PC-3 (cell line): ENCODE measurements at regions of chr18 and their contacts with region 1.

Region 1: GRCh38 chr18:72086421-72086820 is 457.7 kb downstream of the CBLN2 start:
- DNase-seq: peak; percentile 44
- ATAC-seq: peak; percentile 42; the same call in 1 of the 2 replicates
- H3K4me3 ChIP-seq: no peak overlapping the region
- H3K27ac ChIP-seq: no peak overlapping the region
- H3K4me1 ChIP-seq: no peaks in the 10 kb centered on the region
- H3K27me3 ChIP-seq: no peaks in the 10 kb centered on the region
- CTCF ChIP-seq: peak; percentile 64

Region 2: DNA sequence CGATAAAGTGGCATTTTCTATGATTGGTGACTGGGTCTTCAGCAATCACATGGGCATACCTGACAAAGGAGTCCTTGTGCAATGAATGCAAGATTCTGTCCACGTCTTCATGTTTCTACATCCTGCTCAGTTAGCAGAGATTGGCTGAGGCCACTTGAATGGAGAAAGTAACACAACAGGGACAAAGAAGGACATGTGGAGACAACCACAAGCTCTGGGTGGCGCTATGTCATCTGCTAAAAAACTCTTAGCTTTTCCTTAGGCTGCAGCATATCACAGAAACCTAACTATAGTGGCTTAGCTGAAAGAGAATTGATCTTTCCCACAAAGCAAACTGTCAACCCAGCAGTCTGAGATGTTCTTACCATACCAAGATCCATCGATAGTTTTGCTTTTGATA is 687.9 kb before region 1 on chr18:
- CTCF ChIA-PET with region 1: no interaction called
- POLR2A ChIA-PET with region 1: no interaction called
- intact Hi-C with region 1: loop called (anchors 5 kb)
- DNase-seq: peak; percentile 52
- ATAC-seq: peak; percentile 64
- H3K4me3 ChIP-seq: no peak overlapping the region
- H3K27ac ChIP-seq: no peak overlapping the region
- H3K4me1 ChIP-seq: no peaks in the 10 kb centered on the region
- H3K27me3 ChIP-seq: no peaks in the 10 kb centered on the region
- CTCF ChIP-seq: peak; percentile 55

Region 3: DNA sequence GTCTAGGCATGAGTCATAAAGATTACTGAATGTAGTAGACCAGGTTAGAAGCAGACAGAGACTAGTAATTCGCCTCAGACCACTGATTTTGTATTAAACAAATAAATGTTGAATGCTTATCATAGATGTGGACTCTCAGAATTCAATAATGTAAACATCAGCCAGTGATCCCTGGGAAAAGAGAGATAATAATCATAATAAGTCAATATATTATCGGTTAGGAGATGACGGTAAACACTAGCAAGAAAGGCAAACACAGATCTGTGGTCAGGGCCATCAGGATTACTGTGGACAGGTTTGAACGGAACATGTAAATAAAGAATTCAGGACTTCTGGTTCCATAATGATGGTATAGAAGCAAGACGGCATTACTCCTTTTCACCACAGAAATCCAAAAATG is 403.9 kb before region 1 on chr18:
- CTCF ChIA-PET with region 1: no interaction called
- POLR2A ChIA-PET with region 1: no interaction called
- intact Hi-C with region 1: loop called (anchors 10 kb)
- DNase-seq: peak; percentile 50
- ATAC-seq: peak; percentile 31
- H3K4me3 ChIP-seq: no peak overlapping the region
- H3K27ac ChIP-seq: no peak overlapping the region
- H3K4me1 ChIP-seq: no peaks in the 10 kb centered on the region
- H3K27me3 ChIP-seq: no peaks in the 10 kb centered on the region
- CTCF ChIP-seq: no peak